Psoas muscle (tissue), 8 donors: ENCODE measurements at regions of chr2 and their contacts with region 1.

Region 1: DNA sequence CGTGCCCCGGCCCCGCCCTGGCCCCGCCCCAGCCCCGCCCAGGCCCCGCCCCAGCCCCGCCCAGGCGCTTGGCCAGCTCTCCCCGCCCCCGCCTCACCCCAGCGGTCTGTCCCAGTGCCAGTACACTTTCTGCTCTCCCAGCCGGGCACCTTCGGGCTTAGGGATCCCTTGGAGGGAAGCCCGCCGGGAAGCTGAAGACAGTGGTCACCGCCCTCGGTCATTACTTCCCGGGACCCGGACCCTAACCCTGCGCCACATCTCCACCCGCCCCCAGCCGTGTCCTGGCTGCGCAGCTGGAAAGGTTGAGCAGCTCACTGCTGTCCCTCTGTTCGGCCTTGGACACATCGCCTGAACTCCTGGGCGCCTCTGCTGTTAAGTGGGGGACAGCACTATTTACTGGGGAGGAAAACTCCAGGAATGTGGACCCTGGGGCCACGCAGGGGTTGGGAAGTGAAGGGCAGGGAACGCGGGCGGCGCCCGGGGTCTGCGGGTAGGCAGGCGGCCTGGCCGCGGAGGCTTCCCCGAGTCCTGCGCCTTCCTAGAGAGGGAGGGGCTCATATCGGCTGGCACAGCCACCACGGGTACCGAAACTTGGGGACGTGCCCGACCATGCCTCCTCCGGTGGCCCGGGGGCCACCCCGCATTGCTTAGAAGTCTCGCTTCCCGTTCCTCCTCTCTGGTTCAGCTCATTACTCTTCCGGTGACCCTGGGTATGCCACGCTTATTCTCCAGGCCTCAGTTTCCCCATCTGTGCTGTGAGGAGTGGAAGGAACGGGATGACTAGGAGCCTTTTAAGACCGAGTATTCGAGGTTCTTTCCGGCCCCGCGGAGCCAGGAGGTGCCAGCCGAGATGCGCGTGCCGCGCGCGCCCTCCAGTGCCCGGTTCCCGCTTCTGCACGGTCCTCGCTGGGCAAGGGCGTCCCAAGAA is 121.0 kb downstream of the GYPC start:
- DNase-seq: peak; percentile 84 to 90
- ATAC-seq: peak; percentile 92 to 97 (median 94)
- H3K4me3 ChIP-seq: peak overlapping the region; percentile 78
- H3K27ac ChIP-seq: peak overlapping the region; percentile 47
- H3K4me1 ChIP-seq: no peaks in the 10 kb centered on the region
- H3K27me3 ChIP-seq: peaks cover 0 to 3% (median 0%) of the 10 kb centered on the region in 3 donors
- CTCF ChIP-seq: peak; percentile 96

Region 2: GRCh38 chr2:126244937-126245336 is 532.0 kb before region 1 on chr2:
- intact Hi-C with region 1: loop called in 1 of 2 experiments (anchors 5 kb)
- DNase-seq: peak in 1 of 2 donors; percentile 19
- ATAC-seq: no peak
- H3K4me3 ChIP-seq: no peak overlapping the region
- H3K27ac ChIP-seq: no peak overlapping the region
- H3K4me1 ChIP-seq: no peaks in the 10 kb centered on the region
- H3K27me3 ChIP-seq: no peaks in the 10 kb centered on the region
- CTCF ChIP-seq: peak; percentile 31

Region 3: GRCh38 chr2:126527836-126528507 is 249.0 kb before region 1 on chr2:
- intact Hi-C with region 1: loop called (anchors 1 to 2 kb)
- DNase-seq: peak; percentile 49 to 70
- ATAC-seq: peak; percentile 69 to 85 (median 78)
- H3K4me3 ChIP-seq: no peak overlapping the region
- H3K27ac ChIP-seq: no peak overlapping the region
- H3K4me1 ChIP-seq: no peaks in the 10 kb centered on the region
- H3K27me3 ChIP-seq: no peaks in the 10 kb centered on the region
- CTCF ChIP-seq: peak; percentile 72

Region 4: GRCh38 chr2:126644630-126645191 is 132.2 kb before region 1 on chr2:
- intact Hi-C with region 1: loop called (anchors 5 to 10 kb)
- DNase-seq: no peak
- ATAC-seq: no peak
- H3K4me3 ChIP-seq: no peak overlapping the region
- H3K27ac ChIP-seq: no peak overlapping the region
- H3K4me1 ChIP-seq: no peaks in the 10 kb centered on the region
- H3K27me3 ChIP-seq: no peaks in the 10 kb centered on the region
- CTCF ChIP-seq: no peak

Region 5: DNA sequence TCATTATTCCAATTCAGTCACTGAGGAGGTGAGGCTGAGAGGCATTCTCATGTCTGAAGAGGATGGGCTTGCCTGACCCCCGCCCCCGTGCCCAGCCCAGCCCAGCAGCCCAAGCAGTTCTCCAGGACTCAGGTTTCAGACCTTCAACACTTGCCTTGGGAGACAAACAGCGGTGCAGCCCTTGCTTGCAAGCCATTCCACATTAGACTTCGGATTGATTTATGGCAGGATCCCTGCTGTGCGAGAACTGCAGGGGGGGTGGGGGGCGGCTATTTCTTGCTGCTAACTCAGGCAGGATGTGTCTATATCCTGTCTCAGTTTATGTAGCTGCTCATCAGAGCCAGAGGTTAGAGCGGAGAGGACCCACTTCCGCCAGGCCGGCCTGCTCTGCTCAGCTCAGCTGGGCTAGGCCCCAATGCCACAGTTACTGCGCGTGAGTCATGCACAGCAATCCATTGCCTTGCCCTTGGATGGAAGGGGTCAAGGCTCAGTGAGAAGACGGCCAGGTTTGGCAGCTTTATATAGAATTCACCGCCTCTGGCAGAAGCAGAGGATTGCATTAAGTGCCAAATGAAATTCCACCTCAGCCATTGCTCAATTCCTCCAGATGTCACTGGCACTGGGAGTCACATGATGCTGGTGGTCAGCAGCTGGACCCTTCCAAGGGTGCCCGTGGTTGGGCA is 119.2 kb before region 1 on chr2:
- intact Hi-C with region 1: no loop called
- DNase-seq: peak; percentile 89 to 93
- ATAC-seq: peak; percentile 87 to 90 (median 88)
- H3K4me3 ChIP-seq: peak overlapping the region; percentile 85
- H3K27ac ChIP-seq: peak overlapping the region; percentile 97
- H3K4me1 ChIP-seq: peaks cover 51% of the 10 kb centered on the region
- H3K27me3 ChIP-seq: no peaks in the 10 kb centered on the region
- CTCF ChIP-seq: no peak

Region 6: GRCh38 chr2:126995621-126996377 is 218.8 kb after region 1 on chr2:
- intact Hi-C with region 1: no loop called
- DNase-seq: no peak
- ATAC-seq: no peak
- H3K4me3 ChIP-seq: no peak overlapping the region
- H3K27ac ChIP-seq: no peak overlapping the region
- H3K4me1 ChIP-seq: no peaks in the 10 kb centered on the region
- H3K27me3 ChIP-seq: no peaks in the 10 kb centered on the region
- CTCF ChIP-seq: no peak